HEK293 (cell line): ENCODE measurements at regions of chr11 and their contacts with region 1.

Region 1: DNA sequence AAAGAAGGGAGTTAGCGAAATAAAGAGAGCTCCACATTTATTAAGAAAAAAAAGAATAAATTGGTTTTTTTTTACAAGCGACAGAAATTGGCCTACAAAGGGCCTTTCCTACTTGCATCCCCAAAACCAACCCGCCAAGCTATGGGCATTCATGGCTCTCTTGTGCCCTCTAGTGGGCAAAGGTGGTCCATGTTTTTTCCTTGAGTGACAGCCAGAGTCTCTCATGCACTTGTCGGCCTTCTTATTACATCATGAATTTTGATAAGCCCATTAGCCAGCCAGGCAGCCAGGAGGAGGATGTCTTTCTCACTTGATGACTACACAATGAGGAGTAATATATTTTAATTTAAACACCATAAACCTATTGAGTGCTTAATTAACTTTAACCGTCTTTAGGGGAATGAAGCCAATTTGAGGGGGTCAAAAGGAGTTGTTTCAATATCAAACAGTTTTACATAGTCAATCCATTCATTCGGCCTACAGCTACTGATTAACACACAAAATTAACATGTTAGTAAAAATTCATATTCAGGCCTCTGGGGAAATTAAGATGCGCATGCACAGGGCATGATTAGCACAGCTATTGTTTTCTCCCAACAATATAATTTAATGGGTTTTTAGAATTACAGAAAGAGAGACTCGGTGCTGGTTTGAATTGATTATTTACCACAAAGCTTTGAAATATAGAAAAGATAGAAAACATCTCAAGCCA is 85.5 kb downstream of the RCN1 start:
- H3K4me3 ChIP-seq: no peak overlapping the region
- H3K27ac ChIP-seq: no peak overlapping the region
- H3K4me1 ChIP-seq: no peaks in the 10 kb centered on the region
- CTCF ChIP-seq: 0 out of 2 replicates have a peak, but pooled peaks have one; percentile 36

Region 2: GRCh38 chr11:31240338-31240904 is 936.0 kb before region 1 on chr11:
- CTCF ChIA-PET with region 1: interaction called, 19 read pairs
- POLR2A ChIA-PET with region 1: interaction called, 3 read pairs
- H3K4me3 ChIP-seq: no peak overlapping the region
- H3K27ac ChIP-seq: no peak overlapping the region
- H3K4me1 ChIP-seq: no peaks in the 10 kb centered on the region
- CTCF ChIP-seq: no peak

Region 3: DNA sequence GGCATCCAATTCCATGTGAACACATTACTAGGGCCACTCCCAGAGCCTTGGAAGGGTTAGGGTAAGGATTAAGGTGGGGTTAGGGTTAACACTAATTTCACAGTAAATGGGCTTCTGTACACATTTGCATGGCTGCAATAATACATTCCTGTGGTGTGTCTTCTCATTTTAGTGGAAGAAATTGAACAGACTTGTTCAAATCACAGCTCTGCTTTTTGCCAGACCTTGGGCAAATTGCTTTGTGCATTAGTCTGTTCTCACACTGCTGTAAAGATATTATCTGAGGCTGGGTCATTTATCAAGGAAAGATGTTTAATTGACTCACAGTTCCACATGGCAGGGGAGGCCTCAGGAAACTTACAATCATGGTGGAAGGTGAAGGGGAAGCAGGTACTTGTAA is 130.9 kb before region 1 on chr11:
- CTCF ChIA-PET with region 1: interaction called, 120 read pairs
- POLR2A ChIA-PET with region 1: no interaction called
- H3K4me3 ChIP-seq: no peak overlapping the region
- H3K27ac ChIP-seq: no peak overlapping the region
- H3K4me1 ChIP-seq: no peaks in the 10 kb centered on the region
- CTCF ChIP-seq: no peak

Region 4: DNA sequence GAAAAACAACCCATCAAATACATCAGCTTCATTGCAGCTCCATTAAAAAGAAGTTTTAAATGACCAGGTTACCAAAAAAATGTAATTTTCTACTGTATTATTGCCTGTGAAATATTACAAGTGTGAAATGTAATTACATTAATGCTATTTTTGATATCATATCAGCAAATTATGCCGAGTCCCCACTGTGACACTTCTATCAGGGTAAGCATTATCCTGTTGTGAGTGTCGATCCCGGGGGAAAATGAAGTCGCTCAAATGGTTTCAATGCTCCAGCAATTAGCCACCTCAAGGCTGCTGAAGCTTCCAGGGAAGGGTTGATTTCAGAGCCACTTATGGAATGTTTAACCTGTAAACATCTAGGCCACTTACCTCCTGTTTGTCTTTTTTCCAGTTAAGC is 15.1 kb before region 1 on chr11:
- CTCF ChIA-PET with region 1: interaction called, 12 read pairs
- POLR2A ChIA-PET with region 1: no interaction called
- H3K4me3 ChIP-seq: no peak overlapping the region
- H3K27ac ChIP-seq: no peak overlapping the region
- H3K4me1 ChIP-seq: no peaks in the 10 kb centered on the region
- CTCF ChIP-seq: no peak

Region 5: DNA sequence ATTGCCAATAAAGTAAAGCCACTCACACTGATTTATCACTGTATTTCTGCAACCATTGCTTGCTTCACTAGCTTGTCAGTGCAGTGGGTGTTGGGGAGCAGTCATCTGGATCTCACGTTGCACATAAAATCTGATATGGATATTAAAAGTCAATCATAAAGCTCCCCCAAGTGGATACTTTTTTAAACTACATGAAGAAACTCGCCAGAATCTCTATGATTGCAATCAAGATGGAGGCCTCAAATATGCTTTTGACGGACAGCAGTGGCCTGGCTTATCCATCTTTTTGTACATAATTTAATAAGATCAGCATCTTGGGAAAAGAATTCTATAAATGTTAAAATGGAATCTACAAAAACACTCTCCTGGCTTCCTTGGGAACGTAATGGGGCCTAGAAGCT is 121.2 kb after region 1 on chr11:
- CTCF ChIA-PET with region 1: interaction called, 11 read pairs
- POLR2A ChIA-PET with region 1: no interaction called
- H3K4me3 ChIP-seq: no peak overlapping the region
- H3K27ac ChIP-seq: no peak overlapping the region
- H3K4me1 ChIP-seq: no peaks in the 10 kb centered on the region
- CTCF ChIP-seq: no peak